ENCODE measurements at regions of chr7 and their contacts with region 1.

Region 1: DNA sequence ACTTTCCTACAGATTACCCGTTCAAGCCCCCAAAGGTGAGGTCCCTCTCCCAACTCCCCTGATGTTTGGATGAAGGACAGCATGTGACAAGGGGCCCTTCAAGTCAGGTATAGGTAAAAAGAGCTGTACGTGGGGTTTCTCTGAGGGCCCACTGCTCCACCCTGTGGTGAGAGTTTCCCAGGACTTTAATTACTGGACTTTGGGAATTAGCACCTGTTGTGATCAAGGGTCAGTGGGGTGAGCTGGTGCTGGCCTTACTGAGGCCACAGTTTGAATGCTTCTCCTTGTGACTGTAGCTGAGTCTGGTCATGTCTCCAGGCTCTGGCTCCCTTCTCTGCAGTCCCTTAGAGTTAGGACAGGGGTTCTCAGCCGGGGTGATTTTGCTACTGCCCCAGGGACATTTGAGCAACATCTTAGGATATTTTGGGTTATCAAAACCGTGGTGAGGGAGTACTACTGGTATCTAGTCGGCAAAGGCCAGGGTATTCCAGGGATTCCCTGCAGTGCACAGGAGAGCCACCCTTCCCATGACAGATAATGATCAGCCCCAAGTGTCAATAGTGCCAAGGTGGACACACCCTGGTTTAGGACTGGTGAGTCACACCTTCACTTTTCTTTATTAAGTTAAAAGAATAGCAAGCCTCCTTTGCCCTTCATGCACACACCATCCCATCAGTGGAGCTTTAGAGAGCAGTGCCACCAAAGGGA is 16.9 kb downstream of the UBE2D4 start:
- DNase-seq: peak; percentile 32
- H3K4me3 Mint-ChIP-seq: no peak overlapping the region
- H3K27ac Mint-ChIP-seq: no peak overlapping the region
- H3K4me1 Mint-ChIP-seq: peaks cover 9% of the 10 kb centered on the region
- H3K27me3 Mint-ChIP-seq: no peaks in the 10 kb centered on the region
- CTCF ChIP-seq: peak; percentile 39

Region 2: GRCh38 chr7:43954524-43955228 is 11.5 kb after region 1 on chr7:
- CTCF ChIA-PET with region 1: interaction called, 14 read pairs
- POLR2A ChIA-PET with region 1: interaction called, 5 read pairs
- intact Hi-C with region 1: no loop called
- DNase-seq: peak; percentile 62
- H3K4me3 Mint-ChIP-seq: no peak overlapping the region
- H3K27ac Mint-ChIP-seq: no peak overlapping the region
- H3K4me1 Mint-ChIP-seq: no peaks in the 10 kb centered on the region
- H3K27me3 Mint-ChIP-seq: no peaks in the 10 kb centered on the region
- CTCF ChIP-seq: peak; percentile 54